T-cell (primary cell): ENCODE measurements at regions of chr9 and their contacts with region 1.

Region 1: DNA sequence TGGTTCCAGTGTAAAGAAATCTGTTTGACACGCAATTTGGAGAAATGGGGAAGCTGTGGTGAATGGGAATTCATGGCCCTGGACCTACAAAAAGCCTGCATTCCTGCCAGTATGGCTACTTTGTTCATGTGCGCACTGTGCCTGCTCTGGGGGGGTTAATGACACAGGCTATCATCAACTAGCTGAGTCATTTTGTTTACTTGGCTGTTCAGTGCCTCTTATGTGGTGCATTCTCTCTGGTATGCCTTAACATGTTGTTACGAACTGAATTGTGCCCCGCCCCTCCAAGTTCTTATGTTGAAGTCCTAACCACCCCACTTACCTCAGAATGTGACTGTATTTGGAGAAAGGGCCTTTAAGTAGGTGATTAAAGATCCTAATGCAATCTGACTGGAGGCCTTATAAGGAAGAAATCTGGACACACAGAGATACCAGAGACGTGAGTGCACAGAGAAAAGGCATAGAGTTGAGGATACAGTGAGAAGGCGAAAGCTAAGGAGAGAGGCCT is 20.4 kb upstream of the UBAP1 start:
- DNase-seq: no peak
- ATAC-seq: no peak
- H3K4me3 ChIP-seq: no peak overlapping the region
- H3K4me3 Mint-ChIP-seq: no peak overlapping the region
- H3K27ac ChIP-seq: no peak overlapping the region
- H3K27ac Mint-ChIP-seq: no peak overlapping the region
- H3K4me1 ChIP-seq: no peaks in the 10 kb centered on the region
- H3K4me1 Mint-ChIP-seq: no peaks in the 10 kb centered on the region
- H3K27me3 ChIP-seq: no peaks in the 10 kb centered on the region
- H3K27me3 Mint-ChIP-seq: no peaks in the 10 kb centered on the region

Region 2: GRCh38 chr9:33852216-33852826 is 306.1 kb before region 1 on chr9:
- CTCF ChIA-PET with region 1: no interaction called
- POLR2A ChIA-PET with region 1: no interaction called
- DNase-seq: peak; percentile 16 to 76 (median 47)
- ATAC-seq: peak; percentile 54 to 79 (median 64)
- H3K4me3 ChIP-seq: no peak overlapping the region
- H3K4me3 Mint-ChIP-seq: no peak overlapping the region
- H3K27ac ChIP-seq: no peak overlapping the region
- H3K27ac Mint-ChIP-seq: no peak overlapping the region
- H3K4me1 ChIP-seq: peaks cover 7 to 8% of the 10 kb centered on the region in 2 experiments
- H3K4me1 Mint-ChIP-seq: peaks cover 46 to 52% (median 46%) of the 10 kb centered on the region in 3 donors
- H3K27me3 ChIP-seq: no peaks in the 10 kb centered on the region
- H3K27me3 Mint-ChIP-seq: no peaks in the 10 kb centered on the region

Region 3: DNA sequence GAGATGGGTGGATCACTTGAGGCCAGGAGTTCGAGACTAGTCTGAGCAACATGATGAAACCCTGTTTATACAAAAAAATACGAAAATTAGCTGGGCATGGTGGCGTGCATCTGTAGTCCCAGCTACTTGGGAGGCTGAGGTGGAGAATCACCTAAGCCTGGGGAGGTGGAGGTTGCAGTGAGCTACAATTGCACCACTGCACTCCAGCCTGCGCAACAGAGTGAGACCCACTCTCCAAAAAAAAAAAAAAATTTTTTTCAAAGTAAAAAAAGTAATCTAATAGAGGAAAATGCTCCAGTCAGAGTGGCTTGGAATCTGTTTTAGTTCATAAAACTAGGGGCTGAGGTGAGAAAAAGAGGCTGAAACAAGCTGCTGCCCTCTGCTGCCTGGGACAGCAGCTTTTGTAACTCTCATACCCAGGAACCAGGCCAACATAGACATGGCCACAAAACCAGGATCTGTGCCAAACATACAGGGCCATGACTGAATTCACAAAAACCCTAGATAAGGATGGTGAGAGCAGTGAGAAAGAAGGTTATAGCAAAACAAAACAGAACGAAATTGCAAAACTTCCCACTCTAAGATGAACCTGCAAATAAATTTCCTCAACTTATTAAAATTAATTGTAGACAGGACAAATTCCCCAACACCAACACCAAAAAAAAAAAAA is 18.8 kb before region 1 on chr9:
- CTCF ChIA-PET with region 1: interaction called in 1 of 2 experiments, 12 read pairs
- POLR2A ChIA-PET with region 1: no interaction called
- DNase-seq: no peak
- ATAC-seq: no peak
- H3K4me3 ChIP-seq: no peak overlapping the region
- H3K4me3 Mint-ChIP-seq: no peak overlapping the region
- H3K27ac ChIP-seq: no peak overlapping the region
- H3K27ac Mint-ChIP-seq: peak overlapping the region; percentile 28 to 58
- H3K4me1 ChIP-seq: peaks cover 0 to 2% of the 10 kb centered on the region in 2 experiments
- H3K4me1 Mint-ChIP-seq: peaks cover 0 to 8% (median 6%) of the 10 kb centered on the region in 3 donors
- H3K27me3 ChIP-seq: no peaks in the 10 kb centered on the region
- H3K27me3 Mint-ChIP-seq: no peaks in the 10 kb centered on the region